ENCODE measurements at regions of chr1 and their contacts with region 1.

Region 1: DNA sequence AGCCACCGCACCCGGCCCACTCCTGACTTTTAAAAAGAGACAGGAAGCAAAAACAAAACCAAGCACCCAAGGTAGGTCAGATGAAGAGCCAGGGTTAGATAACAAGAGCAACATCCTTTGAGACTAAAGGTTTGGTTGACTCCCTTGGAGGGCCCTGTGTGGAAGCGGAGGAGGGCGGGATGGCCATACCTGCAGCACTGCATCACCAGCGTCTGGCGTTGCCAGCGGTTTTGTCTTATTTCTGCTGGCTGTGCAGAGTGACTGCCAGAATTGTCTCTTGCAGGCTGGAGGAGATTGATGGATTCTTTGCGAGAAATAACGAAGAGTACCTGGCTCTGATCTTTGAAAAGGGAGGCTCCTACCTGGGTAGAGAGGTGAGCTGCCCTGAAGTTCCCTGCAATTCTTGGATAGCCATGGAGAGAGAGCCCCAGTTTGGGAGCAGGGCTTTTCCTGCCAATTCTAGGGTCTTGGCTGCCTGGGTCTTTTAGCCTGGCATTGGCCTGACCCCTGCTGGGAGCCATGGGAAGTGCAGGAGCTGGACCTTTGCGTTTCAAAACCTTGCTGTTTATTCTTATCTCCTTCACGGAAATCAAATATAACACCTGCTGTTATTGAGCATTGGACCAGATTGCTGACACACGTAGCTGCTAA is 24.0 kb downstream of the QSOX1 start:
- DNase-seq: peak; percentile 38
- H3K4me3 ChIP-seq: no peak overlapping the region
- H3K27ac ChIP-seq: no peak overlapping the region
- H3K27me3 ChIP-seq: no peaks in the 10 kb centered on the region
- CTCF ChIP-seq: peak; percentile 98

Region 2: DNA sequence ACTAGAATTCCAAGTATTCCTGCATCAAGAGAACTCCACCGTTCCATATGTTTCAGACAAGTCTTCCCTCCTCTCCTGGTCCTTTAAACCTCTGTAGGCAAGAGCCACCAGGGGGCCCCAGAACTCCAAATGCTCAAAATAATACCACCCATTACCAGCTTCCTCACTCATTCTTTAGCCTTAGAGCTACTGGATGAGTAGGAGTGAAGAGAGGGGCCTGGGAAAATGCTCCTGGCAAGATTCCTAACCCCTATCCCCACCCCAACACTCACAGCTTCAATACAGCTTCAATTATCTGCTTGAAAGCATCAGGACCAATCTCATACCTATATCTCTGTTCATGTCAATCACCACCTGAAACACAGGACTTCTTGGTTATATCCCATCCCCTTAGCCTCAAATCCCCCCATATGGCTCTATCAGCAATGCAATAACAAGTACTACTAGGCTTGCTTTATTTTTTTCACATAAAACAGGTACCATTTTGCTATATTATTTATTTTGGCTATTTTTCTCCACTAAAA is 310.8 kb before region 1 on chr1:
- in situ Hi-C with region 1: loop called (anchors 25 kb)
- DNase-seq: peak; percentile 48
- H3K4me3 ChIP-seq: no peak overlapping the region
- H3K27ac ChIP-seq: no peak overlapping the region
- H3K27me3 ChIP-seq: no peaks in the 10 kb centered on the region
- CTCF ChIP-seq: peak; percentile 88

Region 3: DNA sequence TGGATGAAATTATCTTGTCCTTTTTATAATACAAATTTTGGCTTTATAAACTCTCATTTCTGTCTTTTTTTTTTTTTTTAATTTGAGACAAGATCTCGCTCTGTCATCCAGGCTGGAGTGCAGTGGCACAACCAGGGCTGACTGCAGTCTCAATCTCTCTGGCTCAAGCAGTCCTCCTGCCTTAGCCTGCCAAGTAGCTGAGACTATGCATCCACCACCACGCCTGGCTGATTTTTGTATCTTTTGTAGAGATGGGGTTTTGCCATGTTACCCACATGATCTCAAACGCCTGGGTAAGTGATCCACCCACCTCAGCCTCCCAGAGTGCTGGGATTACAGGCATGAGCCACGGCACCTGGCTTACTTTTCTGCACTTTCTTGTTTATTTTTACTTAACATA is 289.0 kb before region 1 on chr1:
- in situ Hi-C with region 1: no loop called
- DNase-seq: no peak
- H3K4me3 ChIP-seq: no peak overlapping the region
- H3K27ac ChIP-seq: no peak overlapping the region
- H3K27me3 ChIP-seq: no peaks in the 10 kb centered on the region
- CTCF ChIP-seq: no peak

Region 4: DNA sequence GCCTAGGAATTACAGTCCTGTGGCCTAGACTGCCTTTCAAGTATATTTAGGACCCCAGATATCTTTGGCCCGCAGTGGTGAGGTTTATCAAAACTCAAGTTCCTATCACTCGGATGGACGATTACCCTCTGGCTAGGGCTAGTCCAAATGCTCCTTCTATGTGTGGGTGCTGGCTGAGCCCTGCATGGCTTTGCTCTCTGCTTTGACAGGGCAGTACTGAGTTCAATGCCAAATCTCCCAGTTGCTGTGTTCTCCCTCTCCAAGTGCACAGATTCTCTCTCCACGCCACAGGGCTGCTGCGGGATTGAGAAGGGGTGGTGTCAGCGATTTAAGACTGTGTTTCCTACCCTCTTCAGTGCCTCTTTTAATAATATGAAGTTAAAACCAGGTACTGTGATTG is 148.5 kb after region 1 on chr1:
- in situ Hi-C with region 1: no loop called
- DNase-seq: no peak
- H3K4me3 ChIP-seq: no peak overlapping the region
- H3K27ac ChIP-seq: no peak overlapping the region
- H3K27me3 ChIP-seq: no peaks in the 10 kb centered on the region
- CTCF ChIP-seq: no peak

Region 5: GRCh38 chr1:180482425-180483275 is 304.0 kb after region 1 on chr1:
- in situ Hi-C with region 1: no loop called
- DNase-seq: peak; percentile 56
- H3K4me3 ChIP-seq: no peak overlapping the region
- H3K27ac ChIP-seq: no peak overlapping the region
- H3K27me3 ChIP-seq: no peaks in the 10 kb centered on the region
- CTCF ChIP-seq: peak; percentile 55